Natural killer cell (primary cell): ENCODE measurements at regions of chr1 and their contacts with region 1.

Region 1: DNA sequence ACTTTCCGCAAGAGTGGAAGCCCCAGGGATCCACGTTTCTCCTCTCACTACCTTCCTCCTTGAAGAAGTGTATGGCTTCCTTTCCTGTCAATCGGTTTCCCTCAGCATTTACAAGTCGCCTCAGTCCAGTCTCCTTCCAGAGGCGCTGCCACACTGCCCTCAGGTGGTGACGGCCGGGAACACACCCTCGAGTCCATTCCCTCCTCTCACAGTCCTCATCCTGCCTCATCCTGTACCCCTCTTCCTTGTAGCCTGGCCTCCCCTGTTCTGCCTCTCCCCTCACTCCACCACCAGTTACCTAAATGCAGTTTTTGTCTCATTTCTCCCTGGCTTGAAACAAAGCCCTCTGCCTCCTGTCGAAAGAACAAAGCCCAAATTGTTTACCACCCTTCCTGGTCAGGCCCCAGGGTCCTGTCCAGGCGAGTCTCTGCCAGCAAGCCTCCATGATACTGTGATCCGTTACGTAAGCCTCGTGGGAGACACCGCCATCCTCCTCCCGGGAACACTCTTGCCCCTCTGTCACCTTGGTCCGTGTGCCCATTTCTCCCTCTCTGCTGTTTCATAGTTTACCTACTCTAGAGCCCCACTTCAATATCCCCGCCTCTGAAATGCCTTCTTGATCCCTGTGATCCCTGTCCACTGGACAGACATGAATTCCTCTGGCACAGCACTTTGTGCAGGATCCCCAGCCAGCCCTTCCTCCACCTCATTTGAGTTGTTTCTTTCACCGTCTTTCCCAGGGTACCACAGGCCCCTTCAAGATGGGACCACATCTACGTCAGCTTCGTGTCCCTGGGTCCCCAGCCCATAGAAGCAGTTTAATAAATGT is 23.3 kb upstream of the LSM10 start:
- DNase-seq: peak; percentile 85 to 93
- ATAC-seq: peak; percentile 97 to 100 (median 100)
- H3K4me3 ChIP-seq: no peak overlapping the region
- H3K4me3 Mint-ChIP-seq: no peak overlapping the region
- H3K27ac ChIP-seq: no peak overlapping the region
- H3K27ac Mint-ChIP-seq: peak overlapping the region in 1 of 2 donors; percentile 70
- H3K4me1 ChIP-seq: peaks cover 5% of the 10 kb centered on the region
- H3K4me1 Mint-ChIP-seq: peaks cover 11 to 13% of the 10 kb centered on the region in 2 donors
- H3K27me3 ChIP-seq: no peaks in the 10 kb centered on the region
- H3K27me3 Mint-ChIP-seq: no peaks in the 10 kb centered on the region
- CTCF ChIP-seq: peak; percentile 86

Region 2: GRCh38 chr1:36099681-36100341 is 321.2 kb before region 1 on chr1:
- intact Hi-C with region 1: loop called (anchors 2 kb)
- DNase-seq: peak; percentile 68 to 86
- ATAC-seq: peak; percentile 81 to 92 (median 89)
- H3K4me3 ChIP-seq: no peak overlapping the region
- H3K4me3 Mint-ChIP-seq: no peak overlapping the region
- H3K27ac ChIP-seq: no peak overlapping the region
- H3K27ac Mint-ChIP-seq: no peak overlapping the region
- H3K4me1 ChIP-seq: peaks cover 10% of the 10 kb centered on the region
- H3K4me1 Mint-ChIP-seq: peaks cover 0 to 5% of the 10 kb centered on the region in 2 donors
- H3K27me3 ChIP-seq: no peaks in the 10 kb centered on the region
- H3K27me3 Mint-ChIP-seq: no peaks in the 10 kb centered on the region
- CTCF ChIP-seq: peak; percentile 83

Region 3: GRCh38 chr1:36239941-36240637 is 181.0 kb before region 1 on chr1:
- intact Hi-C with region 1: no loop called
- DNase-seq: no peak
- ATAC-seq: no peak
- H3K4me3 ChIP-seq: no peak overlapping the region
- H3K4me3 Mint-ChIP-seq: no peak overlapping the region
- H3K27ac ChIP-seq: no peak overlapping the region
- H3K27ac Mint-ChIP-seq: peak overlapping the region; percentile 71 to 80
- H3K4me1 ChIP-seq: peaks cover 3% of the 10 kb centered on the region
- H3K4me1 Mint-ChIP-seq: peaks cover 27 to 36% of the 10 kb centered on the region in 2 donors
- H3K27me3 ChIP-seq: no peaks in the 10 kb centered on the region
- H3K27me3 Mint-ChIP-seq: no peaks in the 10 kb centered on the region
- CTCF ChIP-seq: no peak

Region 4: DNA sequence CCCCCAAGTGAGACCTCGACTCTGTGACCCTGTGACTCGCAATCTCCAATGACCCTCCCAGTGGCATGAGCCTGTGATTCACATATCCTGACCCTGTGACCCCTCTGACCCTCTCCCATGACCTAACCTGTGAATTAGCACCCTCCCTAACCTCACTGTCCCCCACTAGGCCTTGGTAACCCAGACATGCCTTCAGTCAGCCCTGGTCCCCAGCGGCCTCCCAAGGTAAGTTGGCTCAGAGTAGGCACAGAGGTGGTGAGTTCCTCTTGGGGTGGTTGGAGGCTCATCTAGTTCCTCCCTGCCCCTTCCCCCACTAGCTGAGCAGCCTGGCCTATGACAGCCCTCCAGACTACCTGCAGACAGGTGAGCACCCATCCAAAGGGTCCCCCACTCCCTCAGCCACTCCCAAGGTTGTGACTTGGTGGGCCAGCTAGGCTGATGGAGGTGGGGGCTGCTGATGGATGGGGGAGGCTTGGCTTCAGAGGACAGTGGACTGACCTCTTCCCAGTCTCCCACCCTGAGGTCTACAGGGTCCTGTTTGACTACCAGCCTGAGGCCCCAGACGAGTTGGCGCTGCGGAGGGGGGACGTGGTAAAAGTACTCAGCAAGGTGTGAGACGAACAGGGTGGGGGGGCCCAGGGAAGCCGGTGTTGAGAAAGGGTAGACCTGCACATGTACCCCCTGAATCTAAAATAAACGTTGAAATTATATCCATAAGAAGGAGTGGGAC is 113.3 kb before region 1 on chr1:
- intact Hi-C with region 1: no loop called
- DNase-seq: no peak
- ATAC-seq: no peak
- H3K4me3 ChIP-seq: peak overlapping the region; percentile 48
- H3K4me3 Mint-ChIP-seq: peak overlapping the region; percentile 95
- H3K27ac ChIP-seq: no peak overlapping the region
- H3K27ac Mint-ChIP-seq: peak overlapping the region in 1 of 2 donors; percentile 83
- H3K4me1 ChIP-seq: peaks cover 24% of the 10 kb centered on the region
- H3K4me1 Mint-ChIP-seq: peaks cover 14 to 30% of the 10 kb centered on the region in 2 donors
- H3K27me3 ChIP-seq: no peaks in the 10 kb centered on the region
- H3K27me3 Mint-ChIP-seq: no peaks in the 10 kb centered on the region
- CTCF ChIP-seq: no peak

Region 5: DNA sequence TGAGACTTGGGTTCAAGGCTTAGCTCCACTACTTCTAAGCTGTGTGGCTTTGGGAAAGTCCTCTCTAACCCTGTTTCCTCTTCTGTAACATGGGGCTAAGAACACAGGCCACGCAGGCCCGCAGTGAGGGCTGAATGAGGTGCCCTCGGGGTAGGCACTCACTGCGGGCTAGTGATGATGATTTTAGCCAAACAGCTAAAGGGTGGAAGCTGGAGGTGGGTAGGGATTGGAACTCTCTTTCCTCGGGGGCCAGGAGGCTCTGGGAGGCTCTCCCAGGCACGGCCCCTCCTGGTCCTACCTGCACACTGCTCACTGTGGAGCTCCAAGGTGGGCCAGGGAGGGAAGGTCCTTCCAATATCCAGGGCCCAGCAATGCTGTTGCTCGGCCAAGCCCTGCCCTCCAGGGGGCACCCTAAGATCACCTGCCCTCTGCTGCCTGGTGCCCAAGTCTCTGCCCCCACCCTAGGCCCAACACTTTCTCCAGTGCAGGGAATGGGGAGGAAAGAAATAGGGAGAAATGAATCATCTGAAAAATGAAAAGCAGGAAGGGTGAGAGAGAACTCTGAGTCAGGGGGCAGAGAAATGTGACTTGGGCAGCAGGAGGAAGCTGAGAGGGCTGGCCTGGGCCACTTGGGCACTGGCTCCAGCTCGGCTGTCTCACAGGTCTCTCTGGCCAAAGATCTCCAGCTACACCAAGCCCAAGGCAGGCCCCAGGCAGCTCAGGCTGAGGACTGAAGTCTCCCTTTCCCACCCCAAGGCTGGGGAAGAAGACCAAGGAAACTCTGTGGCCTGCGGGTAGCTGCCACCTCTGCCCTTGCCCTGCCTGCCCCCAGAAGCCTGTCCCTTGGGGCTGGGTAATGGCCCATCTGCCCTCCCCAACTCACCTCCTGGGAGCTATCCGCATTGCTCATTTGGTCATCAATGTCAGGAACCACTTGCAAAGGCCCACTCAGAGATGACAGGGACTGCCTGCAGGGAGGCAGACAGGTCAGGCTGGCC is 78.3 kb before region 1 on chr1:
- intact Hi-C with region 1: loop called (anchors 1 kb)
- DNase-seq: peak; percentile 50 to 81
- ATAC-seq: peak; percentile 66 to 90 (median 86)
- H3K4me3 ChIP-seq: no peak overlapping the region
- H3K4me3 Mint-ChIP-seq: no peak overlapping the region
- H3K27ac ChIP-seq: no peak overlapping the region
- H3K27ac Mint-ChIP-seq: peak overlapping the region in 1 of 2 donors; percentile 36
- H3K4me1 ChIP-seq: peaks cover 5% of the 10 kb centered on the region
- H3K4me1 Mint-ChIP-seq: peaks cover 0 to 13% of the 10 kb centered on the region in 2 donors
- H3K27me3 ChIP-seq: no peaks in the 10 kb centered on the region
- H3K27me3 Mint-ChIP-seq: no peaks in the 10 kb centered on the region
- CTCF ChIP-seq: peak; percentile 62

Region 6: GRCh38 chr1:36511804-36512798 is 91.1 kb after region 1 on chr1:
- intact Hi-C with region 1: no loop called
- DNase-seq: no peak
- ATAC-seq: no peak
- H3K4me3 ChIP-seq: no peak overlapping the region
- H3K4me3 Mint-ChIP-seq: no peak overlapping the region
- H3K27ac ChIP-seq: no peak overlapping the region
- H3K27ac Mint-ChIP-seq: no peak overlapping the region
- H3K4me1 ChIP-seq: no peaks in the 10 kb centered on the region
- H3K4me1 Mint-ChIP-seq: no peaks in the 10 kb centered on the region
- H3K27me3 ChIP-seq: no peaks in the 10 kb centered on the region
- H3K27me3 Mint-ChIP-seq: peaks cover 0 to under 1% of the 10 kb centered on the region in 2 donors
- CTCF ChIP-seq: no peak